Activated CD4-positive, alpha-beta memory T cell treated with anti-CD3 and anti-CD28 coated beads for 36 hours (primary cell): ENCODE measurements at regions of chr12 and their contacts with region 1.

Region 1: GRCh38 chr12:104671407-104672098 is 214.8 kb downstream of the CHST11 start:
- DNase-seq: peak; percentile 94
- H3K4me3 Mint-ChIP-seq: peak overlapping the region; percentile 52
- H3K27ac Mint-ChIP-seq: peak overlapping the region; percentile 95
- H3K4me1 Mint-ChIP-seq: peaks cover 60% of the 10 kb centered on the region
- H3K27me3 Mint-ChIP-seq: no peaks in the 10 kb centered on the region

Region 2: DNA sequence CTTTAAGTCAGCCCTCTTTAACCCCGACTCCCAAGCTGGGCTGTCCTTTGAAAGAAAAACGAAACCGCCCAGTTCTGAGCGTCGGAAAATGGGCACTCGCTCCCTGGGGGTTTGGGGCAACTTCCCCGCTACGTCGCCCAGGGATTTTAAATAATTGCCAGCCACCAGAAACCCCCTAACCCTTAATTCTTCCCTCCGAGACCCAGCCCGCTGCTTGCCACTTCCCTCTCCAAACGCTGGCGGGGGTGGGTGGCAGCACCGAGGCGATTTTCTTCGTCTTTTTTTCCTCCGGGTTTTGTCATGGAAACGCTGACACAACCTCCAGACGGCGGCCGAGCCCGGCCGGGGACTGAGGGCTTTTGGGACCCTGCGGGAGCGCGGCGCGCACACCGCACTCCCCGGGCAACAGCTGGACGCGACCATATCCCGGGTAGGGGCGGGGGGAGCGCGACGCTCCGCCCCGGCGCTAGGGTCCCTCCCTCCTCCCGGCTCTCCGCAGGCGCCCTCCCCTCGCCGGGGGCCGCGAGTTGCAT is 215.1 kb before region 1 on chr12 and contains the start of gene CHST11:
- CTCF ChIA-PET with region 1: interaction called, 4 read pairs
- POLR2A ChIA-PET with region 1: no interaction called
- intact Hi-C with region 1: loop called (anchors 1 kb)
- DNase-seq: peak; percentile 89
- H3K4me3 Mint-ChIP-seq: peak within 1 kb of the TSS; percentile 99
- H3K27ac Mint-ChIP-seq: peak within 1 kb of the TSS; percentile 97
- H3K4me1 Mint-ChIP-seq: peaks cover 29% of the 10 kb centered on the region
- H3K27me3 Mint-ChIP-seq: no peaks in the 10 kb centered on the region
- total RNA-seq, gene CHST11: 58.3 to 59.0 TPM

Region 3: GRCh38 chr12:104478396-104479122 is 193.0 kb before region 1 on chr12:
- CTCF ChIA-PET with region 1: no interaction called
- POLR2A ChIA-PET with region 1: no interaction called
- intact Hi-C with region 1: loop called (anchors 5 kb)
- DNase-seq: peak; percentile 50
- H3K4me3 Mint-ChIP-seq: peak overlapping the region; percentile 84
- H3K27ac Mint-ChIP-seq: peak overlapping the region; percentile 98
- H3K4me1 Mint-ChIP-seq: peaks cover 86% of the 10 kb centered on the region
- H3K27me3 Mint-ChIP-seq: no peaks in the 10 kb centered on the region

Region 4: DNA sequence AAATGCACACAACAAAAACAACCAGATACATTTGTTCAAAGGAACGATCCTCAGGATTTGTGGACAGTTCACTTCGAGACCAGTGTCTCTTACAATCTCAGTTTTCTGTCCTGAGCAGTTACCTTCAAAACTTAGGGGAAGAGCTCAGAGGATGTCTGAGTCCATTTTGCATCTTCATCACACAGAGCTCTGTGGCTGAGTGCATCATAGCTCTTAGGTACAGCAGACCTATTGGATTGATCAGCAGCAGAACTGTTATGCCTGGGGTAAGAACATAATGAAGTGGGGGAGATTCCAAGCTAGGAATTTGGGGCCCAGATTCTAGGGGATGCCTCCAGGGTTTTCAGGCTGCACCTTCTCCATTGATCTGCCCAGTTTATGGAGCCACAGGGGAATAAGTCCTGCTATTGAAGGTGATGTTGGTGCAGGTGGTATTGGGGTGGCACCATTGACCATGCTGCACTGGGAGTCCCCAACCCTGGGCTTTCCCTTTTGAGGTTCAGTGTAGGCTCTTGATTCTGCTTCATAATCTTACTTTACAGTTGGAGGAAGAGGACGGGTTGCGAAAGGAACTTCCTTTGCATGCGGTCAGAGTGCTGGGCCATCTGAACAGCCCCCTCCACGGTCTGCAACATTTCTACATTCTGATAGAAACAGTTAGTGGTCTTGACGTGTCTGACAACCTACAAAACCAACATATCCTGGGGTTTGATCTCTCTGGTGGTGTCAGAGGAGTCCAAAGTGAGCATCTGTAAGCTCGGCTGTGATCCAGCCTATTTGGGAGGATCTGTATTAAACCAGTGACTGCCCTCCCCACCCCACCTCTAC is 102.0 kb before region 1 on chr12:
- CTCF ChIA-PET with region 1: no interaction called
- POLR2A ChIA-PET with region 1: interaction called, 5 read pairs
- intact Hi-C with region 1: loop called (anchors 2 kb)
- DNase-seq: peak; percentile 70
- H3K4me3 Mint-ChIP-seq: peak overlapping the region; percentile 1
- H3K27ac Mint-ChIP-seq: peak overlapping the region; percentile 46
- H3K4me1 Mint-ChIP-seq: peaks cover 62% of the 10 kb centered on the region
- H3K27me3 Mint-ChIP-seq: no peaks in the 10 kb centered on the region

Region 5: GRCh38 chr12:104686196-104686595 is 14.6 kb after region 1 on chr12:
- CTCF ChIA-PET with region 1: interaction called, 3 read pairs
- POLR2A ChIA-PET with region 1: interaction called, 14 read pairs
- intact Hi-C with region 1: loop called (anchors 1 kb)
- DNase-seq: peak; percentile 62
- H3K4me3 Mint-ChIP-seq: no peak overlapping the region
- H3K27ac Mint-ChIP-seq: peak overlapping the region; percentile 92
- H3K4me1 Mint-ChIP-seq: peaks cover 85% of the 10 kb centered on the region
- H3K27me3 Mint-ChIP-seq: no peaks in the 10 kb centered on the region